ENCODE measurements at regions of chr6 and their contacts with region 1.

Region 1: DNA sequence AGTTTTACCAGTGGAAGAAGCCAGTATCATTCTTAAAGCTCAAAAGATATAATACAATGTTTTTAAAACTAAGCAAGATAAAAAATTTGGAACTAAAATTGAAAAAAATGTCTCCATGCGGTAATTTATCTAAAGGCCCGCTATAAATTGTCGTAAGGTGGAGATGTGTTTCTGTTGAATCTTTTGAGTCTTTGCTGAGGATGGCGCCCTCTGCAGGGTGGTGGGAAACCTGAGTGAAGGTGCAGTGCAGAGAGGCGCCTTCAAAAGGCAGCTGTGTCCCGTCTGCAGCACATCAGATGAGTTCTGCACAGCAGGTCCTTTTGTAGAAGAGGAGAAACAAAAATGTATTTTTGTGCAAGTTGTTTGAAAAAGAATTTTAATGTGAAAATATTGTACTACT is 29.4 kb upstream of the KIF25 start:
- DNase-seq: no peak
- ATAC-seq: peak; percentile 81
- H3K4me3 ChIP-seq: no peak overlapping the region
- H3K27ac ChIP-seq: no peak overlapping the region
- H3K4me1 ChIP-seq: no peaks in the 10 kb centered on the region
- H3K27me3 ChIP-seq: no peaks in the 10 kb centered on the region
- CTCF ChIP-seq: peak; percentile 89

Region 2: DNA sequence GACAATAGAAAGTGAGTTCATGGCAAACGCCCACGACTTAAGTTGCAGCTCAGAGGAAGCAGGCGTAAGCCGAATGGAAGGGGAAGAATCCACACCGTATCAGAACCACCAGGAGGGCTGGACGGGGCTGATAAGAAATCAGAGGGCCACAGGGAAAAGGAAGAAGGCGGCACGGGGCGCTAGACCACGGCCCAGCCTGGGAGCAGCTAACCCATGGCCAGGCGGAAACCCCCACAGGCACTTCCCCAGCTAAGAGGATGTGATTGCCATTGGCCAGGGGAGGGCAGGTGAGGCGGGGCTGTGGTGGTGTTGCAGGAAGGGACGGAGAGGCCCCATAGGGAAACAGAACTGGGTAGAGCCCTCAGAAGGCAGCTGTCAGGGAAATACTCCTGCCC is 315.4 kb before region 1 on chr6:
- CTCF ChIA-PET with region 1: interaction called, 13 read pairs
- POLR2A ChIA-PET with region 1: no interaction called
- in situ Hi-C with region 1: no loop called
- intact Hi-C with region 1: no loop called
- DNase-seq: no peak
- ATAC-seq: no peak
- H3K4me3 ChIP-seq: no peak overlapping the region
- H3K27ac ChIP-seq: no peak overlapping the region
- H3K4me1 ChIP-seq: no peaks in the 10 kb centered on the region
- H3K27me3 ChIP-seq: no peaks in the 10 kb centered on the region
- CTCF ChIP-seq: no peak

Region 3: GRCh38 chr6:168132531-168133167 is 164.6 kb after region 1 on chr6:
- CTCF ChIA-PET with region 1: no interaction called
- POLR2A ChIA-PET with region 1: no interaction called
- in situ Hi-C with region 1: no loop called
- intact Hi-C with region 1: no loop called
- DNase-seq: no peak
- ATAC-seq: peak; percentile 90
- H3K4me3 ChIP-seq: peak overlapping the region in 1 of 2 experiments; percentile 1; a peak in 1 of 4 replicates
- H3K27ac ChIP-seq: no peak overlapping the region
- H3K4me1 ChIP-seq: peaks cover 7% of the 10 kb centered on the region
- H3K27me3 ChIP-seq: no peaks in the 10 kb centered on the region
- CTCF ChIP-seq: no peak; the same call in 1 of the 2 replicates

Measured in Panc1 (cell line).